Activated naive CD4-positive, alpha-beta T cell treated with anti-CD3 and anti-CD28 coated beads for 36 hours (primary cell): ENCODE measurements at regions of chr2 and their contacts with region 1.

Region 1: DNA sequence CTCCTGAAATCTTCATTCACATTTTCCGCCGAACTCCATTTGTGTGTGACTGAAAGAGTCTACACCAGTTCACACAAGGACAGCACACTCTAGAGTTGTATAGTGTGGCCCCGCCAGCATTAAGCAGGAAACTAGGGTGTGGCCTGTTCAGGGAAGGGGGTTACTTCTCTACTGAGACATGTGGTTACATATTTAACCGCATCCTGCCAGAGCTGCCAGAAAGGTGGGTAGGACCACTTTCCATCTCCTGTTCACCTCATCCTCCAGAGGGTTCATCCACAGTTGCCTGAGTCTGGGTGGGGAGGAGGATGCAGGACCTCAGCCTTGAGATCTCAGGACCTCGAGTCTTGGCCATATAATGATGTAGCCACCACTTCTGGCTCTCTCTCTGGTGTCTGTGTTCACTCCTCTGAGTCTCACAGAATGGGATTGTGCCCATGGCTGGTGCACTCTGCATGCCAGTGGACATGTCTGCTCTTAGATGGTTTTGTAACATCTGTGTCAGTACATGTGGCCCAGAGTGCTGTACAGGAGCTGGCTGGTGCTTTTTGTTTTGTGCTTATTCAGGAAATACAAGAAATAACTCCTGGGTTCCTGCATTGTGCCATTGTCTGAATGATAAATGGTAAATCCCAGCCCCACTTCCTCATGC is 7.7 kb upstream of the SP140L start:
- DNase-seq: peak; percentile 87
- H3K4me3 Mint-ChIP-seq: peak overlapping the region; percentile 55
- H3K27ac Mint-ChIP-seq: peak overlapping the region; percentile 93
- H3K4me1 Mint-ChIP-seq: peaks cover 54% of the 10 kb centered on the region
- H3K27me3 Mint-ChIP-seq: no peaks in the 10 kb centered on the region

Region 2: GRCh38 chr2:230254152-230254881 is 65.0 kb before region 1 on chr2:
- CTCF ChIA-PET with region 1: no interaction called
- intact Hi-C with region 1: loop called (anchors 2 kb)
- DNase-seq: peak; percentile 78
- H3K4me3 Mint-ChIP-seq: no peak overlapping the region
- H3K27ac Mint-ChIP-seq: no peak overlapping the region
- H3K4me1 Mint-ChIP-seq: peaks cover 13% of the 10 kb centered on the region
- H3K27me3 Mint-ChIP-seq: no peaks in the 10 kb centered on the region

Region 3: DNA sequence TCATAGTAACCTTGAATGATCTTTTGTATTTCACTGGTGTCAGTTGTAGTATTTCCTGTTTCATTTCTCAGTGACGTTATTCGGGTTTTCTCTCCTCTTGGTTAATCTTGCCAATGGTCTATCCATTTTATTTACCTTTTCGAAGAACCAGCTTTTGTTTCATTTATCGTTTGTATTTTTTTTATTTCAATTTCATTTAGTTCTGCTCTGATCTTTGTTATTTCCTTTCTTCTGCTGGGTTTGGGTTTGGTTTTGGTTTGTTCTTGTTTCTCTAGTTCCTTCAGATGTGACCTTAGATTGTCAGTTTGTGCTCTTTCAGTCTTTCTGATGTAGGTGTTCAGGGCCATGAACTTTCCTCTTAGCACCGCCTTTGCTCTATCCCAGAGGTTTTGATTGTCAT is 57.1 kb before region 1 on chr2:
- CTCF ChIA-PET with region 1: no interaction called
- intact Hi-C with region 1: loop called (anchors 2 kb)
- DNase-seq: no peak
- H3K4me3 Mint-ChIP-seq: peak overlapping the region; percentile 45
- H3K27ac Mint-ChIP-seq: peak overlapping the region; percentile 82
- H3K4me1 Mint-ChIP-seq: peaks cover 41% of the 10 kb centered on the region
- H3K27me3 Mint-ChIP-seq: no peaks in the 10 kb centered on the region

Region 4: GRCh38 chr2:230296917-230297316 is 22.4 kb before region 1 on chr2:
- CTCF ChIA-PET with region 1: no interaction called
- intact Hi-C with region 1: no loop called
- DNase-seq: no peak
- H3K4me3 Mint-ChIP-seq: no peak overlapping the region
- H3K27ac Mint-ChIP-seq: no peak overlapping the region
- H3K4me1 Mint-ChIP-seq: no peaks in the 10 kb centered on the region
- H3K27me3 Mint-ChIP-seq: no peaks in the 10 kb centered on the region

Region 5: DNA sequence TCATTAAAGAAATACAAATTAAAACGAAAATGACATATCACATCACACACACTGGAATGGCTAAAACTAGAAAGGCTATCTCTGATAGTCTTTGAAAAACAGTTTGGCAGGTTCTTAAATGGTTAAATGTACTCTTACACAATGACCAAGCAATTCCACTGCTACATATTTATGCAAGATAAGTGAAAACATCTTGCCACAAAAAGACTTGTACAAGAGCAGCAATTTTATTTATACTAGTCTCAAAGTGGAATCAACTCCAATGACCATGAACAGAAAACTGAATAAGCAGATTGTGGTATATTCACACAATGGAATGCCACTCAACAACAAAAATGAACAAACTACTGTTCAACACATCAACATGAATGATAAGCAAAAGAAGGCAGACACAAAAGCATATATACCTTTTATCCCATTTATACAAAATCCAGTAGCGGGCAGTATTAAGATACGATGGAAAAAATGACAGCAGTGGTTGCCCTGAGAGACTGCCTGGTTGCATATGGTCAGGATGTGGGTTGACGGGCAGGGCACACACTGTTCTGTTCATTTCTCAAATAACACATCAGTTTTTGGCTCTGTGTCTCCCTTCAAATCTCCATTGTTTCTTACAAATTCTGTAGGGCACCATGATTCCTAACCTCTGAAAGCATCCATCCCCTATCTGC is 122.0 kb after region 1 on chr2:
- CTCF ChIA-PET with region 1: no interaction called
- intact Hi-C with region 1: no loop called
- DNase-seq: peak; percentile 38
- H3K4me3 Mint-ChIP-seq: no peak overlapping the region
- H3K27ac Mint-ChIP-seq: peak overlapping the region; percentile 30
- H3K4me1 Mint-ChIP-seq: peaks cover 52% of the 10 kb centered on the region
- H3K27me3 Mint-ChIP-seq: no peaks in the 10 kb centered on the region